Panc1 (cell line): ENCODE measurements at regions of chr9 and their contacts with region 1.

Region 1: GRCh38 chr9:13088720-13089427 is 190.6 kb downstream of the MPDZ start:
- DNase-seq: peak; percentile 17
- ATAC-seq: peak; percentile 63
- H3K4me3 ChIP-seq: no peak overlapping the region
- H3K27ac ChIP-seq: no peak overlapping the region
- H3K4me1 ChIP-seq: no peaks in the 10 kb centered on the region
- H3K27me3 ChIP-seq: no peaks in the 10 kb centered on the region
- CTCF ChIP-seq: peak; percentile 57

Region 2: GRCh38 chr9:13033959-13034693 is 54.7 kb before region 1 on chr9:
- CTCF ChIA-PET with region 1: interaction called, 9 read pairs
- POLR2A ChIA-PET with region 1: no interaction called
- in situ Hi-C with region 1: no loop called
- intact Hi-C with region 1: loop called (anchors 2 kb)
- DNase-seq: peak; percentile 24
- ATAC-seq: peak; percentile 83
- H3K4me3 ChIP-seq: peak overlapping the region in 1 of 2 experiments; percentile 36; a peak in 2 of 4 replicates
- H3K27ac ChIP-seq: no peak overlapping the region
- H3K4me1 ChIP-seq: no peaks in the 10 kb centered on the region
- H3K27me3 ChIP-seq: no peaks in the 10 kb centered on the region
- CTCF ChIP-seq: peak; percentile 64

Region 3: GRCh38 chr9:13215791-13216554 is 127.1 kb after region 1 on chr9:
- CTCF ChIA-PET with region 1: no interaction called
- POLR2A ChIA-PET with region 1: no interaction called
- in situ Hi-C with region 1: no loop called
- intact Hi-C with region 1: no loop called
- DNase-seq: no peak
- ATAC-seq: no peak
- H3K4me3 ChIP-seq: no peak overlapping the region
- H3K27ac ChIP-seq: no peak overlapping the region
- H3K4me1 ChIP-seq: no peaks in the 10 kb centered on the region
- H3K27me3 ChIP-seq: no peaks in the 10 kb centered on the region
- CTCF ChIP-seq: no peak